Lower leg skin (tissue), 4 donors: ENCODE measurements at regions of chr11 and their contacts with region 1.

Region 1: DNA sequence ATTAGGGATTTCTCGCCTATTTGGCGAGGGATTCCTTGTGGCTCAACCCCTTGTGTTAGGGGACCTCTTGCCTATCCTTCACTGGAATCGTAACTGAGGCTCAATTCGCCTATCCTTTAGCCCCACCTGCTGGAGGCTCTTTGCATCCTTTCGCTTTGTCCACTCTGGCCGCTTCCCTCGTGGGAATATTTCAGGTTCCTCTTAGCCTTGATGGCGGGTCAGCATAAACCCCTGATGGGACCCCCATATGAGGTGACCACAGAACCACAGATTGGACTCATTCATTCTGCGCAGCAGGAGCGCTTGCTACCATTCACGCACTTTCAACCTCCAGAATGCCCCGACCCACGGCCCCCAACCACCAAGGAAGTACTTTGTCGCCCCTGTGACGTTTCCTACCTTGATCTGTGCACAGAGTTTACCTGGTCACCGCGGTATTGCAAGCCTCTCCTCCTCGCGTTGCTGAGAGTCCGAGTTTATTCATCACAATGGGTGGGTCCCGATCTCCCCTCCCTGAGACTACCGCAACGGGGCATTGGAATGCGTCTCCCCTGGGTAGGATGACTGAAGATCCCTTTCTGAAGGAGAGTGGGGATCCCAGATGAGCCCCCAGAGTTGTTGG is at the start of gene OR52N2:
- DNase-seq: peak in 1 of 2 donors; percentile 62
- H3K4me3 ChIP-seq: peak within 1 kb of the TSS; percentile 15
- CTCF ChIP-seq: peak in 1 of 3 donors; percentile 58
- POLR2A ChIP-seq: no peak
- total RNA-seq, gene OR52N2: not detected

Region 2: GRCh38 chr11:5476184-5476819 is 332.3 kb before region 1 on chr11:
- intact Hi-C with region 1: loop called (anchors 5 kb)
- DNase-seq: no peak
- H3K4me3 ChIP-seq: no peak overlapping the region
- CTCF ChIP-seq: no peak
- POLR2A ChIP-seq: no peak

Region 3: GRCh38 chr11:5522308-5522707 is 286.3 kb before region 1 on chr11:
- intact Hi-C with region 1: no loop called
- DNase-seq: no peak
- H3K4me3 ChIP-seq: no peak overlapping the region
- CTCF ChIP-seq: no peak
- POLR2A ChIP-seq: no peak